HepG2 (cell line): ENCODE measurements at regions of chr7 and their contacts with region 1.

Region 1: DNA sequence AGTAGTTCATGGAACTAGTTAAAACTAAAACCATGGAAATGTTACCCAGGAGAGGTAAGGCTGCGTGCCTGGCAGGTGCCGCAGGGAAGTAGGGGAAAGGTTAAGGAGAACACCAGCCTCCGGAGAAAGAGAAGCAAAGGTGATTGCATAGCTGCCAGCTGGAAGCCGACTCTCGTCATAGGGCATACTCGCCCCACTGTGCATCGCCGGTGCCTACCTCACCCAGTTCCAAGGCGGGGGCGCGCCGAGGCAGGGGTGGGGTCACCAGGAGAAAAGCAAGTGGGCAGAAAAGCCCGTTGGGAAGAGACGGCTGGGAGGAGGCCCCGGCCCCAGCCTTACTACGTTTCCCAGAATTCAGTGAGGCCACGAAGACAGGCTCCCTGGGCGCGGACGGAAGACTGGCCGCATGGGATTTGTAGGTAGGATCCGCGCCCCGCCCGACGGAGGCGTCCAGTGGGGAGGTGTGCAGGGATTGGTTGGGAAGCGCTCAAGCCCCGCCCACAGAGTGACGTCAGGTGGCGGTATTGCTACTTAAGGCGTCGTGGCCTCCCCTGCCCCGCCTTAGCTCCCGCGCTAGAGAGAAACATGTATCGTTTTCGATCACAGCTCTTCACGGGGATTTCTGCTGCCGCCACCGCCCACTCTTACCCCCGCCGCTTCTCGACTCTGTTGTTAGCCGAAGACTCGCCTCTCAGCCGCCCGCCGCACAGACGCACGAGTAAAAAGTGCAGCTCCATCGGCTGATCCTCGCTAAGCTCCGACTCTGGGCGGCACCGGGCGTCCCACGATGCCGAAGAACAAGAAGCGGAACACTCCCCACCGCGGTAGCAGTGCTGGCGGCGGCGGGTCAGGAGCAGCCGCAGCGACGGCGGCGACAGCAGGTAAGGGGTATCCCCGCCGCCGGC is at the start of gene IFRD1:
- DNase-seq: peak; percentile 96
- ATAC-seq: peak; percentile 91
- H3K4me3 ChIP-seq: peak within 1 kb of the TSS; percentile 97 to 100 (median 98)
- H3K27ac ChIP-seq: peak within 1 kb of the TSS; percentile 89
- H3K4me1 ChIP-seq: peaks cover 41% of the 10 kb centered on the region
- H3K27me3 ChIP-seq: no peaks in the 10 kb centered on the region; a peak in 1 of 5 replicates
- CTCF ChIP-seq: no peak
- EP300 ChIP-seq: no peak
- POLR2A ChIP-seq: peak; percentile 97 to 100
- RAD21 ChIP-seq: peak; percentile 37; the same call in 1 of the 2 replicates
- total RNA-seq, gene IFRD1: 55.0 and 55.5 TPM in 2 replicates

Region 2: DNA sequence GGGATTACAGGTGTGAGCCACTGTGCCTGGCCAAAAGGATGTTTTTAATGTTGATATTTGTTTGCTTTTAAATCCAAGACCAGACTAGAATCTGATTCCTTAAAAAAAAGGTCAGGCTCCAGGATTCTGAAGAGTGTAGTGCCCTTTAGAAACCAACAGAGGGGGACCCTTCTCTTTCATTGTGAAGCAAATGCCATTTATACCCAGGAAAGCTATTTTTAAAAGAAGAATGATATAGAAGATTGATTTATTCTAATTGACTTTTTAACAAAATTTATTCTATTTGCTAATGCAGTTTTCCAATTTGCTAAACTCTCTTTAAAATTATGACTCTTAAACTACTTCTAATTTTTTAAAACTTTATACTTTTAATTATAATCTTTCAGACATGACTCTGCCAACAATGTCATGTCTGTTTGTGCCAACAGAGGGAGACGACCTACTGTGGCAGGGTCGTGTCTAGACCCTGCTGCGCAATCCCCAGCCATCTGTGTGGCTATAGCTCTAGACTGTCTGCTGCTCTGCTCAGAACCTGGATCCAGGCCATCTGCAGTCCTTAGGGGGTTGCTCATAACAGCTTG is 686.8 kb before region 1 on chr7:
- CTCF ChIA-PET with region 1: no interaction called
- POLR2A ChIA-PET with region 1: no interaction called
- in situ Hi-C with region 1: no loop called
- intact Hi-C with region 1: loop called (anchors 1 kb)
- DNase-seq: peak; percentile 42
- ATAC-seq: peak; percentile 90
- H3K4me3 ChIP-seq: no peak overlapping the region
- H3K27ac ChIP-seq: no peak overlapping the region
- H3K4me1 ChIP-seq: no peaks in the 10 kb centered on the region
- H3K27me3 ChIP-seq: no peaks in the 10 kb centered on the region; a peak in 1 of 5 replicates
- CTCF ChIP-seq: no peak
- EP300 ChIP-seq: no peak
- POLR2A ChIP-seq: no peak
- RAD21 ChIP-seq: peak; percentile 15; the same call in 1 of the 2 replicates

Region 3: GRCh38 chr7:112306903-112307302 is 143.3 kb before region 1 on chr7:
- CTCF ChIA-PET with region 1: no interaction called
- POLR2A ChIA-PET with region 1: no interaction called
- in situ Hi-C with region 1: no loop called
- intact Hi-C with region 1: no loop called
- DNase-seq: no peak
- ATAC-seq: no peak
- H3K4me3 ChIP-seq: no peak overlapping the region
- H3K27ac ChIP-seq: no peak overlapping the region
- H3K4me1 ChIP-seq: peaks cover 12% of the 10 kb centered on the region
- H3K27me3 ChIP-seq: no peaks in the 10 kb centered on the region
- CTCF ChIP-seq: no peak
- EP300 ChIP-seq: no peak
- POLR2A ChIP-seq: no peak
- RAD21 ChIP-seq: no peak

Region 4: GRCh38 chr7:112362731-112363131 is 87.4 kb before region 1 on chr7:
- CTCF ChIA-PET with region 1: no interaction called
- POLR2A ChIA-PET with region 1: no interaction called
- in situ Hi-C with region 1: no loop called
- intact Hi-C with region 1: no loop called
- DNase-seq: no peak
- ATAC-seq: no peak
- H3K4me3 ChIP-seq: no peak overlapping the region
- H3K27ac ChIP-seq: no peak overlapping the region
- H3K4me1 ChIP-seq: peaks cover 49% of the 10 kb centered on the region
- H3K27me3 ChIP-seq: no peaks in the 10 kb centered on the region; a peak in 2 of 5 replicates
- CTCF ChIP-seq: no peak
- EP300 ChIP-seq: no peak
- POLR2A ChIP-seq: no peak
- RAD21 ChIP-seq: no peak

Region 5: GRCh38 chr7:112422842-112423496 is 27.2 kb before region 1 on chr7:
- CTCF ChIA-PET with region 1: no interaction called
- POLR2A ChIA-PET with region 1: interaction called, 64 read pairs
- in situ Hi-C with region 1: no loop called
- intact Hi-C with region 1: loop called (anchors 2 kb)
- DNase-seq: peak; percentile 89
- ATAC-seq: peak; percentile 95
- H3K4me3 ChIP-seq: peak overlapping the region in 1 of 3 experiments; percentile 24; a peak in 2 of 6 replicates
- H3K27ac ChIP-seq: peak overlapping the region; percentile 63
- H3K4me1 ChIP-seq: peaks cover 65% of the 10 kb centered on the region
- H3K27me3 ChIP-seq: no peaks in the 10 kb centered on the region
- CTCF ChIP-seq: no peak
- EP300 ChIP-seq: peak in 1 of 2 experiments; percentile 71; a peak in 3 of 4 replicates
- POLR2A ChIP-seq: 0 out of 4 replicates have a peak, but pooled peaks of 1 of the 2 experiments have one; percentile 34
- RAD21 ChIP-seq: no peak

Region 6: GRCh38 chr7:112462236-112462635 is 12.1 kb after region 1 on chr7:
- CTCF ChIA-PET with region 1: no interaction called
- POLR2A ChIA-PET with region 1: interaction called, 53 read pairs
- in situ Hi-C with region 1: no loop called
- intact Hi-C with region 1: no loop called
- DNase-seq: peak; percentile 52
- ATAC-seq: peak; percentile 39; the same call in 1 of the 3 replicates
- H3K4me3 ChIP-seq: no peak overlapping the region
- H3K27ac ChIP-seq: no peak overlapping the region
- H3K4me1 ChIP-seq: no peaks in the 10 kb centered on the region
- H3K27me3 ChIP-seq: no peaks in the 10 kb centered on the region
- CTCF ChIP-seq: no peak
- EP300 ChIP-seq: no peak
- POLR2A ChIP-seq: no peak
- RAD21 ChIP-seq: no peak